ENCODE measurements at regions of chr1 and their contacts with region 1.

Region 1: GRCh38 chr1:67561704-67562113 is 123.3 kb upstream of the GADD45A start:
- DNase-seq: peak; percentile 92 to 93
- ATAC-seq: peak; percentile 69 to 91 (median 78)
- H3K4me3 ChIP-seq: no peak overlapping the region
- H3K27ac ChIP-seq: peak overlapping the region in 9 of 10 donors; percentile 10 to 64 (median 54)
- H3K4me1 ChIP-seq: peaks cover 0 to 42% (median 29%) of the 10 kb centered on the region in 9 donors
- H3K27me3 ChIP-seq: no peaks in the 10 kb centered on the region
- CTCF ChIP-seq: peak; percentile 76 to 92 (median 88)

Region 2: DNA sequence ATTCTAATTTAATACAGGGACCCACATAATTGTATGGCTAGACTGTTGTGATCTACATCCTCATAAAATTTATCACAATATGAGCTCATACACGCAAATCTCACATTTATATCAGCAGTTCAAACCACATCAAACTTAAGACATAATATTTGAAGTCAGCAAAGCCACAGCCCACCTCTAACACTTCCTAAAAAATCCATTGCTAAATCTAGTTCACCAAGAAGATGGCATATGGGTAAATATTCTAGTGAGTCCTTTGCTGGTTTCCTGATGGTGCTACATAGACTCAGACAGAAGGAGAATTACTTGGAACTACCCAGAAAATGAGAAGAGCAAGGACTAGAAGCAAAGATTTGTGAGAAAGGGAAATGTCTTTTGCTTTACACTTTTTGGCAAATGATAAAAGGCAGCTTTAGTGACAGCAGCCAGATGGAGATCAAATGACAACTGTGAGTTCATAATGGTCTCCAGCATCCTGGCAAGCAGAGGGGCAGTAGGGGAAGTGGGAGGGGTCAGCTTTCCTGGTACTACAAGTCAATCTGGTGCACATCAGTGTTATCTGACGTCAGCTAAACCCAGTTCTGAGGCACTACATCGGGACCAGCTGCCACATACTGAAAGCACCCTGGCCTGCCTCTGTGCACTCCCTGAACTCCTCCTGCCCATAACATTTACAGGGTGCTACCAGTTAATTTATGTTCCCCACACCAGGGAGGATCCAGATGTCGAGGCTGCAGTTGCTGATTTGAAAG is 112.7 kb after region 1 on chr1:
- intact Hi-C with region 1: loop called in 1 of 10 experiments (anchors 5 kb)
- DNase-seq: peak in 1 of 2 donors; percentile 72
- ATAC-seq: peak; percentile 73 to 91 (median 86)
- H3K4me3 ChIP-seq: no peak overlapping the region
- H3K27ac ChIP-seq: peak overlapping the region in 7 of 10 donors; percentile 28 to 72 (median 52)
- H3K4me1 ChIP-seq: peaks cover 4 to 17% (median 12%) of the 10 kb centered on the region in 9 donors
- H3K27me3 ChIP-seq: no peaks in the 10 kb centered on the region
- CTCF ChIP-seq: no peak